AG04449 (cell line): ENCODE measurements at regions of chr22 and their contacts with region 1.

Region 1: DNA sequence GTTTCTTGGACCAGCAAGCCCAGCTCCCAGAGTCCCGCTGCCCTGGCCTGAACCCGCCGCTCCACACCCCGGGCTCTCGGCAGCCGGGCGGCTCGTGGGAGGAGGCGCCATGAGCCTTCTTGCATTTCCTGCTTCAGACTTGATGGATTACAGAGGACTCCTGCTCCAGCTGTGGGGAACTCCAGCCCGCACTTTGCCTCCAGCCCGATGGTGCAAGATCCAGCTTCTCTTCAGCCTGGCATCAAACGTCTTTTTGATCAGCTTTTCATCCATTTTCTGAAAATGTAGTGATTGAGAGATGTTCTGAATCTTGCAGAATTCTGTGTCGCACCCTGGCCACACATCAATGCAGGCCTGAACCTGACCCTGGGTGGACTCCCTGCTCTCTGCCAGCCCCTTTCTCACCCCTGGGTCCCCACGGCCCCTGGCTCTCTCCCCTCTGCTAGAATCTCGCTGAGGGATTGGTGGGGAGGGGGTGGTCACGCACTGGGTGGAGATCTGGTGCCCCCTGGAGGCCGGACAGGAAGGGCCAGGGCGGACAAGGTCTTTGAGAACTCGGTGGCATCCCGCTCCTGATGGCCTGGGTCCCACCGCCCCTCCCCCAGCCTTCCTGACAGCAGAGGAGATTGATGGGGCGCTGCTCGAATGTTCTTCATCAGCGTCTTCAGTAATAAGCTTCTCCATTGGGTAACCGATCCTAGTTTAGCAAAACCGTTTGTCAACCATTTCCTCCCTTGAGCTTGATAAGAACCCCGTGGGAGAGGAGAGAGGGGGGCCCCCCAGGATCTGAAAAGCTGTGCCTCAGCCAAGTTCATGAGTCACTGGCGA is 12.1 kb upstream of the NFAM1 start:
- DNase-seq: peak; percentile 42
- H3K4me3 ChIP-seq: peak overlapping the region; percentile 55
- CTCF ChIP-seq: peak; percentile 89

Region 2: GRCh38 chr22:41966607-41967240 is 477.6 kb before region 1 on chr22:
- CTCF ChIA-PET with region 1: interaction called, 52 read pairs
- POLR2A ChIA-PET with region 1: no interaction called
- DNase-seq: peak; percentile 63
- H3K4me3 ChIP-seq: no peak overlapping the region
- CTCF ChIP-seq: no peak

Region 3: GRCh38 chr22:42169055-42169469 is 275.2 kb before region 1 on chr22:
- CTCF ChIA-PET with region 1: interaction called, 114 read pairs
- POLR2A ChIA-PET with region 1: no interaction called
- DNase-seq: no peak
- H3K4me3 ChIP-seq: no peak overlapping the region
- CTCF ChIP-seq: peak; percentile 94

Region 4: GRCh38 chr22:42294034-42294985 is 150.0 kb before region 1 on chr22:
- CTCF ChIA-PET with region 1: no interaction called
- POLR2A ChIA-PET with region 1: no interaction called
- DNase-seq: no peak
- H3K4me3 ChIP-seq: no peak overlapping the region
- CTCF ChIP-seq: no peak

Region 5: DNA sequence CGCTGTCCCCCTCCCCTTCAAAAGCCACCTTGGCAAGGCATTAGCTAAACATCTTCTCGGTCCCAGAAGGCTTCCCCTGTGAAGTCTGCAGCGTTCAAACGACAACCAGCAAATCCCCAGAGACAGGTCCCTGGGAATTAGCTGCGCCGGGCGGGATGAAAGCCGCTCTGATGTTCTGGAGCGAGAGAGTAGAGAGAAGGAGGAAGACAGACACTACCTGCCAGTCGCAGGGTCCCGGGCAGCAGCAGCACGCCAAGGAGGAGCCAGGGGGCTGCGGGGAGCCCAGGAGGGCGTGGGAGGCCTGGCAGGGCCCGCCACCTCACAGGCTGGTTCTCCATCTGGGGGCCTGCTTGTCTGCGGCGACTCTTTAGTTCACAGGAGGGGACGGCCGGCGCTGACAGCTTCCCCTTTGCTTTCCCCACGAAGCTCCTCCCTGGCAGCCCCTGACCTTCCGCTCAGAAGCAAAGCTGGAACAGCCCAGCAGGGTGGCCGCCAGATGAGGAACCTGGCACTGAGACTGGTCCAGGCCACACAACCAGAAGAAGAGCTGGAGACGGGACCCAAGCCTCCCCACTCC is 12.2 kb before region 1 on chr22 and contains the start of gene NFAM1:
- CTCF ChIA-PET with region 1: interaction called, 31 read pairs
- POLR2A ChIA-PET with region 1: no interaction called
- DNase-seq: no peak
- H3K4me3 ChIP-seq: no peak within 1 kb of the TSS
- CTCF ChIP-seq: no peak

Region 6: GRCh38 chr22:42462016-42462415 is 17.7 kb after region 1 on chr22:
- CTCF ChIA-PET with region 1: interaction called, 46 read pairs
- POLR2A ChIA-PET with region 1: no interaction called
- DNase-seq: no peak
- H3K4me3 ChIP-seq: no peak overlapping the region
- CTCF ChIP-seq: no peak

Region 7: GRCh38 chr22:42473484-42474193 is 29.3 kb after region 1 on chr22:
- CTCF ChIA-PET with region 1: interaction called, 21 read pairs
- POLR2A ChIA-PET with region 1: no interaction called
- DNase-seq: no peak
- H3K4me3 ChIP-seq: no peak overlapping the region
- CTCF ChIP-seq: peak; percentile 62

Region 8: GRCh38 chr22:42493393-42493792 is 49.1 kb after region 1 on chr22:
- CTCF ChIA-PET with region 1: no interaction called
- POLR2A ChIA-PET with region 1: no interaction called
- DNase-seq: no peak
- H3K4me3 ChIP-seq: no peak overlapping the region
- CTCF ChIP-seq: no peak

Region 9: DNA sequence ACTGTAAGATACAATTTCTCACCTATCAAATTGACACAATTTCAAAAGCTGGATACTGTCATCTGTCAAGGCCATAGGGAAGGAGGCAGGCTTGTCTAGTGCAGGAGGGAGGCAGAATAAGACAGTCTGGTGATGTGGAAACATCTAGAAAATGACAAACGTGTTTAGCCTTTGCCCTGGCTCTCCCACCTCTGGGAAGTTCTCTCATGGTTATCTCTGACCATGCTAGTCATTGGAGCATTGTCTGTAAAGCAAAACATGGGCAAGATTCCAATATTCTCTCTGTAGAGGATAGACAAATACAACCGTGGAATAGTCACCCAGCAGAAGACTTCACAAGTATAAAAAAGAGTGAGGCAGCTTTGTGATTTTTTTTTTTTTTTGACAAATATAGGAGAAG is 100.4 kb after region 1 on chr22:
- CTCF ChIA-PET with region 1: no interaction called
- POLR2A ChIA-PET with region 1: no interaction called
- DNase-seq: no peak
- H3K4me3 ChIP-seq: no peak overlapping the region
- CTCF ChIP-seq: no peak